Ascending aorta (tissue), 2 donors: ENCODE measurements at regions of chr17 and their contacts with region 1.

Region 1: GRCh38 chr17:12463102-12463501 is 202.6 kb upstream of the MYOCD start:
- DNase-seq: peak in 1 of 2 donors; percentile 83
- H3K4me3 ChIP-seq: no peak overlapping the region
- H3K27ac ChIP-seq: peak overlapping the region; percentile 64 to 74
- H3K4me1 ChIP-seq: peaks cover 0 to 8% of the 10 kb centered on the region in 2 donors
- H3K27me3 ChIP-seq: no peaks in the 10 kb centered on the region
- CTCF ChIP-seq: no peak

Region 2: GRCh38 chr17:12415031-12415430 is 48.1 kb before region 1 on chr17:
- intact Hi-C with region 1: loop called (anchors 5 kb)
- DNase-seq: peak in 1 of 2 donors; percentile 78
- H3K4me3 ChIP-seq: no peak overlapping the region
- H3K27ac ChIP-seq: peak overlapping the region; percentile 63 to 67
- H3K4me1 ChIP-seq: peaks cover 0 to 10% of the 10 kb centered on the region in 2 donors
- H3K27me3 ChIP-seq: no peaks in the 10 kb centered on the region
- CTCF ChIP-seq: no peak

Region 3: GRCh38 chr17:12510535-12510934 is 47.4 kb after region 1 on chr17:
- intact Hi-C with region 1: loop called (anchors 5 kb)
- DNase-seq: no peak
- H3K4me3 ChIP-seq: no peak overlapping the region
- H3K27ac ChIP-seq: no peak overlapping the region
- H3K4me1 ChIP-seq: peaks cover 0 to 8% of the 10 kb centered on the region in 2 donors
- H3K27me3 ChIP-seq: no peaks in the 10 kb centered on the region
- CTCF ChIP-seq: no peak

Region 4: DNA sequence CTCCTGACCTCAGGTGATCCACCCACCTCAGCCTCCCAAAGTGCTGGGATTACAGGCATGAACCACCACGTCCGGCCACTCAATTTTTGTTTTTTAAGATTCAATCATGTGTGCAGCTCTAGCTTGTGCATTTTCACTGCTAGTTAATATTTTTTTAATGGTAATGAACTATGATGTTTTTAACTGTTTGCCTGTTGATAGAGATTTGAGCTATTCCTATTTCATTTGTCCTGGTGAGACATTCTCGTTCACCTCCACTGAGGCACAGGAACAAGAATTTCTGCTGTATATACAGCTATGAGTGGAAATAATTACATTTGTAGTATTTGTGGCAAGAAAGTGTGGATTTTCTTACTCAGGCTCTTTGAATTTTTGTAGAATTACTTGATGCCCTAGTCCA is 64.9 kb after region 1 on chr17:
- intact Hi-C with region 1: loop called (anchors 5 kb)
- DNase-seq: no peak
- H3K4me3 ChIP-seq: no peak overlapping the region
- H3K27ac ChIP-seq: no peak overlapping the region
- H3K4me1 ChIP-seq: peaks cover 0 to 1% of the 10 kb centered on the region in 2 donors
- H3K27me3 ChIP-seq: no peaks in the 10 kb centered on the region
- CTCF ChIP-seq: no peak

Region 5: DNA sequence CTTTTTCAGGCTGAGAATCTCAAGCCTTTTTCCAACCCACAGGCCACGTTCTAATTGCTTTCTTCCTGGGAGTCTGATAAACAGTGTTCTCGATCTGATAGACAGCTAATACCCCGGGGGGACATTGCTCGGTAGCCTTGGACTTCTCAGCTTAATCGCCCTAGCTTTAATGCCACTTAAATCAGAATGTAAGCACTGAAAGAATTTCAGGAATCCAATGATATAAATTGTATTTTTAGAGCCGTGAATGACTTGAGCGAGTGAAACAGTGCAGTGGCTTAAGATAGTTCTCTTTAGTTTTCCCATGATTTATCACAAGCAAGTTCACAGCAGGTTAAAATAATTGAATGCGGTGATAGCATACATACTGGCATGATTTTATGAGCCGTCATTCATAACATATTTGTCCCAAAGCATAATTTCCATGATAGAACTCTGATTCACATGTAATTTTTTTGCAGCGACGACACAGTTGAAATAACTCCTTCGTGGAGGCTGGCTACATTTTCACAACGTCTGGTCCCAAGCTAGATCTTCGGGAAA is 86.5 kb after region 1 on chr17:
- intact Hi-C with region 1: no loop called
- DNase-seq: peak in 1 of 2 donors; percentile 68
- H3K4me3 ChIP-seq: peak overlapping the region; percentile 51 to 58
- H3K27ac ChIP-seq: peak overlapping the region; percentile 84 to 93
- H3K4me1 ChIP-seq: peaks cover 5 to 23% of the 10 kb centered on the region in 2 donors
- H3K27me3 ChIP-seq: no peaks in the 10 kb centered on the region
- CTCF ChIP-seq: no peak

Region 6: GRCh38 chr17:12730931-12731521 is 267.9 kb after region 1 on chr17:
- intact Hi-C with region 1: loop called (anchors 5 kb)
- DNase-seq: peak; percentile 77 to 96
- H3K4me3 ChIP-seq: no peak overlapping the region
- H3K27ac ChIP-seq: peak overlapping the region; percentile 81 to 91
- H3K4me1 ChIP-seq: peaks cover 0 to 35% of the 10 kb centered on the region in 2 donors
- H3K27me3 ChIP-seq: no peaks in the 10 kb centered on the region
- CTCF ChIP-seq: no peak

Region 7: DNA sequence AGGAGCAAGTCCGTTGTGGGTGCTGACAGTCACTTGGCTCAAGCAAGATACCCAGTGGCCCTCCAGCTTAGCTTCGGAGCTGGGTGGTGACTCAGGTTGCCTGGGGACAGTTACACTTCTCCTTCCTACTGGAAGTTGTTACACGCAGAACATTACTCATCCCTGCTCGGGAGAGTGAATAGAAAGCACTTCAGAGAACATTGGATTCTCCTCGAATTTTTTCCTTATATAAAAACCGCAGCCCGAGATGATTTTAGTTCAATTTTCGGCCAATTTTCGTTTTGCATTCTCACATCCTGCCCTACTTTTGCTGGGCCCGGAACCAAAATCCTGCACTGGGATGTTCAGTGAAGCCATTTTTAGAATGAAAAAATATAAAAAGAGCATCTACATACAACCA is 455.0 kb after region 1 on chr17:
- intact Hi-C with region 1: no loop called
- DNase-seq: no peak
- H3K4me3 ChIP-seq: no peak overlapping the region
- H3K27ac ChIP-seq: no peak overlapping the region
- H3K4me1 ChIP-seq: no peaks in the 10 kb centered on the region
- H3K27me3 ChIP-seq: no peaks in the 10 kb centered on the region
- CTCF ChIP-seq: no peak